ENCODE measurements at regions of chr10 and their contacts with region 1.

Region 1: GRCh38 chr10:88810196-88810961 is 7.8 kb downstream of the LIPM start:
- DNase-seq: peak; percentile 31
- H3K4me3 Mint-ChIP-seq: no peak overlapping the region
- H3K27ac Mint-ChIP-seq: no peak overlapping the region
- H3K4me1 Mint-ChIP-seq: peaks cover 15% of the 10 kb centered on the region
- H3K27me3 Mint-ChIP-seq: no peaks in the 10 kb centered on the region

Region 2: DNA sequence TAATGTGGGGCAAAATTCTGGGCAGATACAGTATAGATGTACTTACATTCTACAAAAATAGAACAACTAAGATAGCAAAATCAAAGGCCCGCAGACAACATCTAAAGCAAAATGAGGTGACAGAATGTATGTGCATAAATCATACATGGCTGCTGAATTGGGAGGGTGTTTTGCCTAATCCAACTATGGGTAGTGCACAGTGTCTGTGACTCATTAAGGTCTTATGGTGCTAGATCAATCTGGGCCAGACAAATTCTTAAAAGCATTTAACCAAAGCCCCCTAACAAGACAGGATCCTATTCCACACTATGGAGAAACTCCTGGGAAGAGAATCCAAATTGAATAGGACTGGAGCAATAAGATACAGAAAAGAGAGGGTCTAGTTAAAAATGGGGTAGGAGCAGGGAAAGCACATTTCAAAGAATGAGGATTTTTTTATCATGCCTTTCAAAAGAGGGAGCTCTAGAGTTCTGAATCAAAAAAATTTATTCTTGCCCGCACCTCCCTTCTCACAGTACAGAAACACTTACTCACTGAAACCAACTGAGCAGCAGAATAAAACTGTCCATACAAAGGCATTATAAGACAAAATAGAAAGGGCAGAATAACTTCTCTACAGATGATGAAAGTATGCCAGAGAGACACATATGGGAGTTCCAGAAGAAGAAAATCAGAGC is 408.6 kb before region 1 on chr10:
- CTCF ChIA-PET with region 1: no interaction called
- POLR2A ChIA-PET with region 1: no interaction called
- intact Hi-C with region 1: loop called (anchors 10 kb)
- DNase-seq: no peak
- H3K4me3 Mint-ChIP-seq: no peak overlapping the region
- H3K27ac Mint-ChIP-seq: no peak overlapping the region
- H3K4me1 Mint-ChIP-seq: peaks cover 6% of the 10 kb centered on the region
- H3K27me3 Mint-ChIP-seq: no peaks in the 10 kb centered on the region

Region 3: DNA sequence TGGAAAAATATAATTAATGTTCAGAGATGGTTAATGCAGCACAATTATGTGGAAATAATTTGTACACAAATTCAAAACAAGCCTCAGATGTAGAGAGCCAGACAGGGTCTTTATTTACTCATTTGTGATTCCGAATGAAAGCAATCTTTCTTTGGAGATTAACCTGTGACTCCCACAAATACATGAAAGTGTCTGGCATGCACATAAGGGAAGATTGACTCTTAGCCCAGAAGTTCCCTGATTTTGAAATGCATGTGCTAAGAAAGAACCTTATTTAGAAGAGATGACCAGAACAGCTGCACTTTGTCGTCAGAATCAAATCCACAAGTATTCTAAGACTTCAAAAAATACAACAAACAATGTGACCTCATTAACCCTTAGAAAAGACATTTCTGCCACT is 272.3 kb before region 1 on chr10:
- CTCF ChIA-PET with region 1: no interaction called
- POLR2A ChIA-PET with region 1: no interaction called
- intact Hi-C with region 1: no loop called
- DNase-seq: no peak
- H3K4me3 Mint-ChIP-seq: no peak overlapping the region
- H3K27ac Mint-ChIP-seq: no peak overlapping the region
- H3K4me1 Mint-ChIP-seq: no peaks in the 10 kb centered on the region
- H3K27me3 Mint-ChIP-seq: no peaks in the 10 kb centered on the region

Region 4: DNA sequence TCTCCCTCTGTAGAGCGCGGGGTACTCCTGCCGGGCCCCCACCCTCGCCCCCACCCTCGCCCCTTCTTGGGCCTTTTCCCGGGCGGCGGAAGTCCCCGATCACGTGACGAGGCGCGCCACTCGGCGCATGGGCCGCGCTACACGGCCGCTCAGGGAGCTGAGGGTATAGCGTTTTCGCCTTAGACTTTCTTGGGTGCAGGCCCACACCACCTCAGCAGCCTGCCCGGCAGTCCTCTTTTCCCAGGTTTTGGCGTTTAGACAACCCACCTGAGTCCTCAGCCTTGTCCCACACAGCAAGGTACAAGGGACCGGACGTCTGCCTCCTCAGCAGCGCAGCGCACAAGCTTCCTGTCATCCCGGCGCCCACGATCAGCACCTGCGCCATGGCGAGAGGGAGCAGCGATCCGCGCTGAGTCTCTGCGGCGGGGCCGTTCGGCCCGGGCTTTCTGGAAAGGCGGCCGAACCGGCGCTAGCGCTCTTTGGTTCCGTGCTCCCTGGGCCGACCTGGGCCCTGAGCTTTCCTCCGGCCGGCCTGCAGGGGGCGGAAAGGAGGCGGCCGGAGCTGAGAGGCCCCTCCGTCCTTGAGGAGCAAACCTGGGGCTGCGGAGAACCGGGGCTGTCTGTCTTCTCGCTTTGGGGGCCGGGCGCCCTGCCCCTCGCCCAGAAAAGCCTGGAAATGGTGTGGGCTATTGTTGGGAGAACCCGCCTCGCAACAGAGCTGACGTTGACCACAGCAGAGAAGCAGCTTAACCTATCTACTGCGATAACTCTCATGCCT is 227.4 kb before region 1 on chr10 and contains the start of gene RNLS:
- CTCF ChIA-PET with region 1: interaction called, 3 read pairs
- POLR2A ChIA-PET with region 1: no interaction called
- intact Hi-C with region 1: loop called (anchors 5 kb)
- DNase-seq: peak; percentile 80
- H3K4me3 Mint-ChIP-seq: peak within 1 kb of the TSS; percentile 81
- H3K27ac Mint-ChIP-seq: peak within 1 kb of the TSS; percentile 86
- H3K4me1 Mint-ChIP-seq: peaks cover 11% of the 10 kb centered on the region
- H3K27me3 Mint-ChIP-seq: peaks cover 4% of the 10 kb centered on the region
- total RNA-seq, gene RNLS: 4.0 to 4.7 TPM

Region 5: DNA sequence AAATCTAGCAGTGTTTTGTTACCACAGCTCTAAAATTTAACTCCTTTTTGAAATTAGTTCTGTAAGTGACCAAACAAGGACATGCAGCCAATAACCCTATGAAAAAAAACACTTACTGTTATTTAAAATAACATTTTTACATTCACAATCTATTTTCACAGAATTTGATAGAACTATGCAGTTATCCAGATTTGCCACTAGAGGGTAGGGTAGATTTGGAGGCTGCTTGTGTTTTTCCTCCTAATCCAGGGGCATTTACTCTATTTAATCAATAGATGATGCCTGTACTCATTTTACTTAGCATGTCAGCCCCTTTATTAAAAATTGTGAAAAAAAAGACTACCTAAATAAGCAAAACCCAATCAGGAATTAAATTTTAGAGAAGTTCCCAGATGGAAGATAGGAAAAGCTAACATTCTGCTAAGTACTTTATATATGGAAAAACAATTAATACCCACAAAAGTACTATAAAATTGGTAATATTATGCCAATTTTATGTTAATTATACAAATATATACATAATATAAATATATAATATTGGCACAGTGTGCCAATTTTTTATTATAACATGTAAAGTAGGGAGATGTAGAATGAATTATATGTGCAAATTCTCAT is 122.4 kb before region 1 on chr10:
- CTCF ChIA-PET with region 1: interaction called, 31 read pairs
- POLR2A ChIA-PET with region 1: no interaction called
- intact Hi-C with region 1: loop called (anchors 1 kb)
- DNase-seq: no peak
- H3K4me3 Mint-ChIP-seq: no peak overlapping the region
- H3K27ac Mint-ChIP-seq: no peak overlapping the region
- H3K4me1 Mint-ChIP-seq: no peaks in the 10 kb centered on the region
- H3K27me3 Mint-ChIP-seq: peaks cover 5% of the 10 kb centered on the region

Region 6: GRCh38 chr10:88693392-88694020 is 116.9 kb before region 1 on chr10:
- CTCF ChIA-PET with region 1: interaction called, 31 read pairs
- POLR2A ChIA-PET with region 1: no interaction called
- intact Hi-C with region 1: loop called (anchors 1 kb)
- DNase-seq: no peak
- H3K4me3 Mint-ChIP-seq: no peak overlapping the region
- H3K27ac Mint-ChIP-seq: no peak overlapping the region
- H3K4me1 Mint-ChIP-seq: no peaks in the 10 kb centered on the region
- H3K27me3 Mint-ChIP-seq: peaks cover 11% of the 10 kb centered on the region

Region 7: GRCh38 chr10:88728107-88728763 is 82.1 kb before region 1 on chr10:
- CTCF ChIA-PET with region 1: interaction called, 22 read pairs
- POLR2A ChIA-PET with region 1: no interaction called
- intact Hi-C with region 1: loop called (anchors 1 kb)
- DNase-seq: peak; percentile 76
- H3K4me3 Mint-ChIP-seq: no peak overlapping the region
- H3K27ac Mint-ChIP-seq: no peak overlapping the region
- H3K4me1 Mint-ChIP-seq: no peaks in the 10 kb centered on the region
- H3K27me3 Mint-ChIP-seq: peaks cover 1% of the 10 kb centered on the region

Region 8: DNA sequence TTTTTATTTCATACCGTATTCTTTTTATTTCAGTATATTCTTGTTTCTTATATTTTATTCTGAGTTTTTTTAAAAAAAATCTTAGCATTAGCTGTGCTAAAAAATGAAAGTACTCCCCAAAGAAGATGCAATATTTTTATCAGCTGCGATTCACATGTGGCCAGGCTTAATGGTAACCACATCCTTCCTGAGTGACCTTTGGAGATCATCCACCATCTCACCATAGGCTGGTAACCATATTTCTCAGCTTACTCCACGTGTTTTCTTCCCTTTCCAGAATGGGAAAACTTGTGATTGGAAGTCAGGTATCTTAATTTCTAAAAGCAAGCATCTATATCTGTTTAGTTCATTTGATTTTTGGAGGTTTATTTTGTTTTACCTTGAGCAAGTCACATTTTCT is 26.7 kb before region 1 on chr10:
- CTCF ChIA-PET with region 1: no interaction called
- POLR2A ChIA-PET with region 1: no interaction called
- intact Hi-C with region 1: no loop called
- DNase-seq: no peak
- H3K4me3 Mint-ChIP-seq: no peak overlapping the region
- H3K27ac Mint-ChIP-seq: no peak overlapping the region
- H3K4me1 Mint-ChIP-seq: no peaks in the 10 kb centered on the region
- H3K27me3 Mint-ChIP-seq: peaks cover 7% of the 10 kb centered on the region

Region 9: GRCh38 chr10:88820748-88821389 is 10.5 kb after region 1 on chr10:
- CTCF ChIA-PET with region 1: interaction called, 16 read pairs
- POLR2A ChIA-PET with region 1: interaction called, 7 read pairs
- intact Hi-C with region 1: no loop called
- DNase-seq: no peak
- H3K4me3 Mint-ChIP-seq: no peak overlapping the region
- H3K27ac Mint-ChIP-seq: no peak overlapping the region
- H3K4me1 Mint-ChIP-seq: peaks cover 20% of the 10 kb centered on the region
- H3K27me3 Mint-ChIP-seq: no peaks in the 10 kb centered on the region